ENCODE measurements at regions of chr10 and their contacts with region 1.

Region 1: DNA sequence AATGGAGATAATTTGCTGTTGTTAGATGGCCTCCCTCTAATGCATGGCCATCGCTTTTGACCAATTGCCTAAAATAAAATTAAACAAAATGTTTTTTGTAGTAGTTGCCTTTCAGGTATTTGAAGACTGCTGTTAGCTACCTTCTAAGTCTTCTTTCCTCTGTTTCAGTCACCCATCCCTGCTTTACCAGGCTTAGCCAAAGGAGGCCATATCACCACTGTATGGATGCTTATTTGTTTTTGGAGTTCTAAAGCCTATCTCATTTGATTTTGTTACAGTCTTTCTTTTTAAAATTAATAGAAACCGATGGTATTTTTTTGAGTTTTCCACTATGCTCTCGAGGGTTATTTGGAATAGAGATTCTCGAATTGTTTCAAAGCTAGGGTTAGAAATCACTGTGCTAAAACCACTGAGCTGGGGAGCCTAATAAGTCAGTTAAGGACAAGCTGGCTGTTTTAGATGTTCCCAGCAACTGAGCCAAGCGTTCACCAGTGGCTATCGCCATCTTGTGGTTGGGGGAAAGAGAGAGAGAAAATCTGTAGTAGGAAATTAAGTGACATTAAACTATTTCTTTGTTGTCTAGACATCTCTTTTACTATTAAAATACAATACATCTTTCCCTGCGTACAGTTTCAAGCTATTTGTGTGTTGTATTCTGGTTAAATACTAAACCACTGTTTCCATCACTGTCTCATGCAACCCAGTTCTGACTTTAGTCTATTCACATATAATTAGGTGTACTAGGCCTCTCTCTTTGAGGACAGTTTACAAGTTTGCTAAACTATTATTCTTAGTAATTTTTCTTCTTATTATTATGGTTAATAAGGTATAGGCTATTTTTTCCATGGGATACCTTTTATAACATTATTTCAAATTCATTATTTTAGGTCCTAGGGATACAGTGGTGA is 52.2 kb downstream of the GPR158 start:
- DNase-seq: no peak
- H3K4me3 Mint-ChIP-seq: no peak overlapping the region
- H3K27ac Mint-ChIP-seq: no peak overlapping the region
- H3K4me1 Mint-ChIP-seq: no peaks in the 10 kb centered on the region
- H3K27me3 Mint-ChIP-seq: peaks cover 2% of the 10 kb centered on the region

Region 2: GRCh38 chr10:25068152-25069058 is 158.6 kb before region 1 on chr10:
- intact Hi-C with region 1: no loop called
- DNase-seq: no peak
- H3K4me3 Mint-ChIP-seq: no peak overlapping the region
- H3K27ac Mint-ChIP-seq: no peak overlapping the region
- H3K4me1 Mint-ChIP-seq: peaks cover 32% of the 10 kb centered on the region
- H3K27me3 Mint-ChIP-seq: peaks cover 15% of the 10 kb centered on the region

Region 3: GRCh38 chr10:25113191-25114035 is 113.6 kb before region 1 on chr10:
- intact Hi-C with region 1: loop called (anchors 1 kb)
- DNase-seq: peak; percentile 9
- H3K4me3 Mint-ChIP-seq: no peak overlapping the region
- H3K27ac Mint-ChIP-seq: no peak overlapping the region
- H3K4me1 Mint-ChIP-seq: no peaks in the 10 kb centered on the region
- H3K27me3 Mint-ChIP-seq: peaks cover 5% of the 10 kb centered on the region

Region 4: DNA sequence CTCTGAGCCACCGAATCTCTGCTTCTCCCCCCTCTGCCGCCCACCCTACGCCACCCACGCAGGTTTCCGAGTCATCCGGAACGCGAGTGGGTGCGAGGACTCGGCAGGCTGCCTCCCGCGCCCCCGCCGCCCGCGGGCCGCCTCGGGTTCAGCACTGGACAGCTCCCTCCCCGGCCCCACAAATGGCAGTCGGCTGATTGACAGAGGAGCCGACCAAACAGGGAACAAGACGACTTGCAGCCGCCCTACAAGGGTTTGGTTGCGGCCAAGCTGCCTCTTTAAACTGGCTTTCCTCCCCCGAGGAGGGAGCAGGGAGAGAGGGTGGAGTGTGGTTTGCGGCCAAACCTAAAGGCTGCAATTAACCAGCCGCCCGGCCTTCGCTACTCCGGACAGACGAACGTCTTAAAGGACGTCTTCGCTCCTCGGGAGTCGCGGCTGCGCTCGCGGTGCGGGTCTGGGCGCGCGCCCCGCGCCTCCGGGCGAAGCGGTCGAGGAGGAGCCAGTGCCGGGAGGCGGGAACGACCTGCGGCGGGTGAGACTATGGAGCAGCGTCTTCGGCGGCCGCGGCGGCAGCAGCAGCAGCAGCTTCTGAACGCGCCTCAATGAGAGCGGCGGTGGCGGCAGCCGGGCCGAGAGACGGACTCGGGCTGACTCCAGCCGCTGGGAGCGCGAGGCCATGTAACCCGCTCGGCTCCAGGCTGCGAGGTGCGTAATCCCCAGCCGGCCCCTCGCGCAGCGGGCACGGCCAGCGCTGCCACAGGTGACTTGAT is 52.4 kb before region 1 on chr10 and contains the start of gene GPR158:
- intact Hi-C with region 1: no loop called
- DNase-seq: peak; percentile 38
- H3K4me3 Mint-ChIP-seq: no peak within 1 kb of the TSS
- H3K27ac Mint-ChIP-seq: no peak within 1 kb of the TSS
- H3K4me1 Mint-ChIP-seq: no peaks in the 10 kb centered on the region
- H3K27me3 Mint-ChIP-seq: peaks cover 39% of the 10 kb centered on the region
- total RNA-seq, gene GPR158: not detected in 2 replicates

Region 5: GRCh38 chr10:25261558-25261957 is 34.5 kb after region 1 on chr10:
- intact Hi-C with region 1: no loop called
- DNase-seq: no peak
- H3K4me3 Mint-ChIP-seq: no peak overlapping the region
- H3K27ac Mint-ChIP-seq: no peak overlapping the region
- H3K4me1 Mint-ChIP-seq: no peaks in the 10 kb centered on the region
- H3K27me3 Mint-ChIP-seq: no peaks in the 10 kb centered on the region

Region 6: DNA sequence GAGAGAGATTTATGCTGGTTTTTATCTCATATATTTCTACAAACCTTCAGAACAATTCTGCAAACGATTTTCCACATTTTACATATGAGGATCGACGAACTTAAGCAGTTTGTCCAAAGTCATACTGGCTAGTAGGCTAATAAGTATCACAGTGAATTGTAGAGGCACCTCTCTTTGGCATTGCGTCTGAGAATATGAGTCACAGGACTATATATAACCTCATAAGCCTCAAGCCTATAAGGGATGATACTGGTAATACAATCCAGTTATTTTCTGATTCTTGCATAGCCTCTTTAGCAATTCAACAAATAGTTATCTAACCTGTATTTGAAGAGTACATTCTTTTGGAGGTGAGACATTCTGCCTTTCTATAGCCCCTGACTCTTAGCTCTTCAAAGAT is 77.6 kb after region 1 on chr10:
- intact Hi-C with region 1: no loop called
- DNase-seq: no peak
- H3K4me3 Mint-ChIP-seq: no peak overlapping the region
- H3K27ac Mint-ChIP-seq: no peak overlapping the region
- H3K4me1 Mint-ChIP-seq: no peaks in the 10 kb centered on the region
- H3K27me3 Mint-ChIP-seq: no peaks in the 10 kb centered on the region

Measured in activated T-helper 1 cell treated with anti-CD3 and anti-CD28 coated beads, Interleukin-12 subunit alpha, Interleukin-12 subunit beta, Interleukin-2, Interleukin-4 antibody, amounts not matched to agents 30 ng/mL and 10 ng/mL and 1 ng/mL, durations not matched to agents 14 hours and 24 hours and 36 hours (primary cell).